ENCODE measurements at regions of chr19 and their contacts with region 1.

Region 1: GRCh38 chr19:16197622-16198369 is at the start of gene AP1M1:
- DNase-seq: peak; percentile 98
- H3K4me3 ChIP-seq: peak within 1 kb of the TSS; percentile 95 to 96 (median 95)
- H3K27ac ChIP-seq: peak within 1 kb of the TSS; percentile 81
- H3K4me1 ChIP-seq: peaks cover 21% of the 10 kb centered on the region
- H3K27me3 ChIP-seq: no peaks in the 10 kb centered on the region
- CTCF ChIP-seq: no peak
- POLR2A ChIP-seq: peak; percentile 88
- total RNA-seq, gene AP1M1: 114 and 129 TPM in 2 replicates

Region 2: GRCh38 chr19:15836595-15837337 is 361.0 kb before region 1 on chr19:
- CTCF ChIA-PET with region 1: no interaction called
- POLR2A ChIA-PET with region 1: no interaction called
- dilution Hi-C with region 1: no loop called
- intact Hi-C with region 1: loop called (anchors 2 kb)
- DNase-seq: peak; percentile 91
- H3K4me3 ChIP-seq: peak overlapping the region; percentile 20 to 76 (median 66)
- H3K27ac ChIP-seq: peak overlapping the region; percentile 66
- H3K4me1 ChIP-seq: peaks cover 7% of the 10 kb centered on the region
- H3K27me3 ChIP-seq: no peaks in the 10 kb centered on the region
- CTCF ChIP-seq: no peak
- POLR2A ChIP-seq: peak; percentile 55

Region 3: DNA sequence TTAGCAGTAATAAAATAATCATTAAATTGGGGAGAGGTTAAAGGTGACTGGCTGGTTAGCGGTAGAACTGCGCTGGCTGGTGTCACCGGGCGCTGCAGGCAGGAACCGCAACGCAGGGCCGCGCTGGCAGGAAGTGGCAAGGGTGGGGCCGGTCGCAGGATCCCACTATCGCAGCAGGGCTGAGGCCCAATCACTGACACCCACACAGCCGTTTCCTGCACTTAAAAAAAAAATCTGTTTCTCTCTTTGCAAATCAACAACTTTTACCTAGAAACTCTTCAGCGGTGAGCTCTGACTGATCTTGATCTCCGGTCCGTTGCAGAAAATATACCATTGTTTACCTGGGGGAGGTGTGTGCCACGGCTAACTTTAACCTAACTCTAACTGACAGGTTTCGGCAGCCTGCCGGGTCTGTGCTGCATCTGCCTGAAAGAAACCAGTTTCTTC is 173.8 kb after region 1 on chr19:
- CTCF ChIA-PET with region 1: no interaction called
- POLR2A ChIA-PET with region 1: no interaction called
- dilution Hi-C with region 1: loop called (anchors 25 kb)
- intact Hi-C with region 1: no loop called
- DNase-seq: no peak
- H3K4me3 ChIP-seq: no peak overlapping the region
- H3K27ac ChIP-seq: no peak overlapping the region
- H3K4me1 ChIP-seq: peaks cover 13% of the 10 kb centered on the region
- H3K27me3 ChIP-seq: no peaks in the 10 kb centered on the region
- CTCF ChIP-seq: no peak
- POLR2A ChIP-seq: no peak